Tibial artery (tissue), 4 donors: ENCODE measurements at regions of chr4 and their contacts with region 1.

Region 1: DNA sequence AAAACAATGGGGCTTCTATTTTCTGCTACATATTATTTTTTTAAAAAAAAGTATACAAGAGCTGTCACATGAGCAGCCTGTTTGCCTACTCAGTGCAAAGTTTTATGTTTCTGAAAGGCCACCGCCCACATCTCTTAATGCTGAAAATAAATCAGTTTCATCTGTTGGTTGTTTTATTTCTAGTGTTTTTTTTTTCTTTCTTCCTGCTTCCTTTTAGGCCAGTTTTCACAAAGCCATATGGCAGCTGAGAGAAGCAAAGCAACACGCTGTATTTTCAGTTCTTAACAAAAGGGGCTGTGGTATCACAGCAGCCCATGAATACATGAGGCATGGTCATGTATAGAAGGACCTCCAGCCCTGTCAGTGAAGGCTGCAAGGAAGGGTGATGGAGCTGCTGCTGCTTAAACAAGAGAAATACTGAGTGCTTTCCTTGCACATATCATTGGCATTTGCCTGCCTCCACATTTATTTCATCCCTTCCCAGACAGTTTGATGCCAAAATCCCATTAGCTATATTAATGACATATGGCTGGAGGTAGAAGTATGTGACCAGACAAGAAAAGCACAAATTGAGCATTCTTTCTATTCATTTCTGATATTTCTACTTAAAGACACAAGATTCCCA is 172.5 kb downstream of the PCDH18 start:
- DNase-seq: no peak
- H3K4me3 ChIP-seq: no peak overlapping the region
- H3K27ac ChIP-seq: peak overlapping the region; percentile 8 to 41
- H3K4me1 ChIP-seq: peaks cover 0 to 30% (median 2%) of the 10 kb centered on the region in 4 donors
- H3K27me3 ChIP-seq: no peaks in the 10 kb centered on the region
- CTCF ChIP-seq: no peak

Region 2: DNA sequence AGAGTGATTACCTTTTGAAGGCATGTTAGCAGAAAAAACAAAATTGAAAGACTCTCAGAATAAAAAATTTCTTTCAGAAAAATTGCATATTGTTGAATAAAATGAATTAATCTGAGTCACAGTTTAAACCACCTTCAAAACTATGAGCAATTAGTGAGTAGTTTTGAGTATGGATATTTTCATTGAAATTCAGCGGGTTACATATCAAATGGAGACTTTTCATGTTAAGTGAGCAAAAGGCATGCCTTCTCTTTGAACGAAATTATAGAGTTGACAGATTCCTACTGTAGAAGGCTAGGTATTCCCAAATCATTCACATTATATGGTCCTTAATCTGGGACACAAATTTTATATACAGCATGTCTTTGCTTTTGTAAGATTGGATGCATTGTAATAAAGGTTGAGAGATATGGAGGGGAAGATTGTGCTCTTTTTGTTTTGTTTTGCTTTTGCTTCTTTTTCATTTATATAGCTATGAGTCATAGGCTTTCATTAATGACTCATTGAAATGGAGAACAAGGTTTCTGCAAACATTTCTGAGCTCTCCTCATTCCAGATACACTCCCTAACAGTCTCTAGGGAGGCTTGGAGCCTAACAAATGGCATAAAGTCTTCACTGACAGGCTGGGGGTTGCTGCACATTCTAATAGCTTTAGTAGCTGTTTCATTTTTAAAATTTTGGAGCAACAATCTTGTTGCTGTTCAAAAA is 150.9 kb after region 1 on chr4:
- intact Hi-C with region 1: loop called (anchors 10 kb)
- DNase-seq: no peak
- H3K4me3 ChIP-seq: peak overlapping the region in 1 of 2 donors; percentile 35
- H3K27ac ChIP-seq: peak overlapping the region; percentile 52 to 55
- H3K4me1 ChIP-seq: peaks cover 0 to 37% (median 1%) of the 10 kb centered on the region in 4 donors
- H3K27me3 ChIP-seq: no peaks in the 10 kb centered on the region
- CTCF ChIP-seq: no peak